CD4-positive, alpha-beta T cell (primary cell): ENCODE measurements at regions of chr2 and their contacts with region 1.

Region 1: DNA sequence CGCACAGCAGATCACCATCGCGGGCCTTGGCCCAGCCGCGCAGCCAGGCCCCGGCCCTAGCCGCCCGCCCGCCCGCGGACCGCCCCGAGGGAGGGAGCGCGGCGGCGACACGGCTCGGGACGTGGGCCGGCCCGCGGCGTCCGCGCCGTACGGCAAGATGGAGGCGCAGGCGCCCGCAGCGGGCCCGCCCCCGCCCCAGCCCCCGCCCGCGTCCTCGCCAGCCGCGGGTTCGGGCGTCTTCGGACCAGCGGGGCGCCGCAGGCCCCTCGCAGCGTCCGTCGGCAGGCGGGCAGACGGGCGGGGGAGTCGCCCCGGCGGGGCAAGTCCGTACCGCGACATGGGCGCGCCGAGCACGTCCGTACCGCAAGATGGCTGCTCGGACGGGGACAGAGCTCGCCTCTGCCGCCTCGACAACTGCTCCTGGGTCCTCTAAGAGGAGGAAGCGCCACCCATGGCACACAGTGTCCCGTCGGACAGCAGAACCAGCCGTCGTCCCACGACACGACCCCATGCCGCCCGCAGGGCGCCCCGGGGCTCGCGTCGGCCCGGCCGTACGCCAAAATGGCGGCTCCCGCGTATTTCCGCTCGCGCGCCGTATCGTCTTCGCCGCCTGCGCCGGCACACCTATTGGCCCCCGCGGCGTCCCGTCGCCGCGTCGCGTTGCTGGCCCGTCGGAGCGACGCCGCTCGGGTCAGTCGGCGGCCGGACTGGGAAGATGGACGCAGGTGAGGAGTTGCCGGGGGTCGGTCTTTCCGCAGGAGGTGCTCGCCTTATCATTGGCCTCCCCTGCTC is at the starts of genes ATG4B and THAP4:
- DNase-seq: peak; percentile 52 to 89 (median 68)
- ATAC-seq: peak; percentile 66
- H3K4me3 ChIP-seq: peak within 1 kb of the TSS; percentile 76
- H3K4me3 Mint-ChIP-seq: peak within 1 kb of the TSS; percentile 95
- H3K27ac ChIP-seq: peak within 1 kb of the TSS; percentile 82 to 93
- H3K27ac Mint-ChIP-seq: peak within 1 kb of the TSS; percentile 84
- H3K4me1 ChIP-seq: peaks cover 45% of the 10 kb centered on the region
- H3K4me1 Mint-ChIP-seq: peaks cover 56% of the 10 kb centered on the region
- H3K27me3 ChIP-seq: no peaks in the 10 kb centered on the region
- H3K27me3 Mint-ChIP-seq: no peaks in the 10 kb centered on the region
- CTCF ChIP-seq: no peak
- total RNA-seq, gene ATG4B: 86.5 to 89.4 TPM
- total RNA-seq, gene THAP4: 27.5 to 31.4 TPM

Region 2: DNA sequence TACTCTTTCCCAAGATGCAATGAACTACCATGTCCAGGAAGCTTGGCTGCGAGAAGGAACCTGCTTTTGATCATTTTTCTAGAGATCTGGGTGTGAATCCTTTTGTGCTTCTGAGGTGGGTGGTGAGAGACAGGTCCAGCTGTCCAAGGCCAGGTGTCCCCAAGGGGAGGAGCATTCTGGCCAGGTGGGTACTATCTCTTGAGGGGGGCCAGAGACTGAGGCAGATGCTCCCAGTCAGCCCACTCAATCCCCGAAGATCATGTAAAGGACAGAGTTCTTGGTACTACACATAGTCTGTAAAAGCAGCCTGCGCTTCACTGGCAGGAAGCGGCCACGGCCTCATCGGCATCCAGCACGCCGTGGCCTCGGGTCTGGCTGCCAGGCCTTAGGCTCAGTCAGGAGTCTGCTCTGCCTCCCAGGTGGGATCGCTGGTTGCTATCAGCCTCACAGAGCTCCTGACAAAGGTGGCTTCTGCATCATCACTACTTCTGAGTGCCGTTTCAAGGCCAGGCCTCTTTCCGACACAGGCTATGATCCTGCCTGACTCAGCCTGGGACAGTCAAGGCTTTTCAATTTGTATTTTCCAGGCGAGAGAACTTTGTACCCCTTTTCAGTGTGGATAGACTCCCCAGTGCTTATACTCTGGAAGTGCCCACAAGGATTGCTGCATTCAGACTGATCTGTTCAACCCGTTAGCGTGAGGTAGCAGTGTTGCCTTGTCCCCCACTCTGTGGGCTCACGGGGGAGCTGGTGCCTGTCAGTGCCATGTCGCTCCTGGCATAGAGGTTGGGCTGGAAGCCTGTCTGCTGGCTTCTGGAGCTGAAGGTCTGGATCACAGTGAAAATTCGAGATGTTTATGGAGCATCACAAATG is 157.9 kb before region 1 on chr2:
- CTCF ChIA-PET with region 1: no interaction called
- POLR2A ChIA-PET with region 1: no interaction called
- intact Hi-C with region 1: no loop called
- DNase-seq: no peak
- ATAC-seq: no peak
- H3K4me3 ChIP-seq: no peak overlapping the region
- H3K4me3 Mint-ChIP-seq: no peak overlapping the region
- H3K27ac ChIP-seq: no peak overlapping the region
- H3K27ac Mint-ChIP-seq: no peak overlapping the region
- H3K4me1 ChIP-seq: no peaks in the 10 kb centered on the region
- H3K4me1 Mint-ChIP-seq: no peaks in the 10 kb centered on the region
- H3K27me3 ChIP-seq: peaks cover 0 to under 1% of the 10 kb centered on the region in 2 experiments
- H3K27me3 Mint-ChIP-seq: peaks cover 3% of the 10 kb centered on the region
- CTCF ChIP-seq: no peak

Region 3: DNA sequence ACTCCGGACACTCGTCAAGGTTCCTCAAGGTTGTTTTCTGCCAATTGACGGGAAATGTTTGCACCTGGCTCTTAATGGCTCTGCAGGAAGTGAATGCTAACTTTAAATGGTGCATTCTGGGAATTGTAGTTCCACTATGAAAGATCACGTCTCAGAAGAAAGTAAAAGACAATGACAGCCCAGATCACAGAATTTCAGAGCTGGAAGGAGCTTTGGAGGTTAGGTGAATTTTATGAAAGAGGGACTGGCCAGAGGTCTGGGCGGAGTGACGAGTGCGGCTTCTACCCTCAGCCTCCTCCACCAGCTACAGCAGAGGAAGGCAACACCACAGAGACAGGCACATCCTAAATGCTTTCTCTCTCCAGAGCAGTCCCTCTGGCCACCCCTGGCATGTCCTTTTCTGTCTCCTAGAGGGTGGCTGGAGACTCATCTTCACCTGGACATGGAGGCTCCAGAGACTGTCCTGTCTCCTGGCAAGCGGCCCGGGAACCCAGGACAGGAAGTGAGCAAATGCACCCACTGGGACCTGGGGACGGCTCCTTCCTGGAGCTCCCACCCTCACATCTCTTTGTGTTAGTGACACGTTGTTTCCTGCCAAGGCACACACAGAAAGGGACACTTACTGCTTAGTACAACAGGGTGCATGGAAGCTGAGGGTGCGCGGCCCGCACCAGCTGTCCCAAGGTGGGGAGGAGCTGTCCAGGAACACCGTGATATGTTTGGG is 19.6 kb before region 1 on chr2:
- CTCF ChIA-PET with region 1: no interaction called
- POLR2A ChIA-PET with region 1: interaction called, 28 read pairs
- intact Hi-C with region 1: loop called in 1 of 2 experiments (anchors 2 kb)
- DNase-seq: peak in 8 of 14 experiments; percentile 17 to 81 (median 44)
- ATAC-seq: peak; percentile 84
- H3K4me3 ChIP-seq: peak overlapping the region; percentile 61
- H3K4me3 Mint-ChIP-seq: peak overlapping the region; percentile 88
- H3K27ac ChIP-seq: peak overlapping the region; percentile 58 to 75
- H3K27ac Mint-ChIP-seq: peak overlapping the region; percentile 77
- H3K4me1 ChIP-seq: peaks cover 26% of the 10 kb centered on the region
- H3K4me1 Mint-ChIP-seq: peaks cover 30% of the 10 kb centered on the region
- H3K27me3 ChIP-seq: no peaks in the 10 kb centered on the region
- H3K27me3 Mint-ChIP-seq: no peaks in the 10 kb centered on the region
- CTCF ChIP-seq: no peak

Region 4: DNA sequence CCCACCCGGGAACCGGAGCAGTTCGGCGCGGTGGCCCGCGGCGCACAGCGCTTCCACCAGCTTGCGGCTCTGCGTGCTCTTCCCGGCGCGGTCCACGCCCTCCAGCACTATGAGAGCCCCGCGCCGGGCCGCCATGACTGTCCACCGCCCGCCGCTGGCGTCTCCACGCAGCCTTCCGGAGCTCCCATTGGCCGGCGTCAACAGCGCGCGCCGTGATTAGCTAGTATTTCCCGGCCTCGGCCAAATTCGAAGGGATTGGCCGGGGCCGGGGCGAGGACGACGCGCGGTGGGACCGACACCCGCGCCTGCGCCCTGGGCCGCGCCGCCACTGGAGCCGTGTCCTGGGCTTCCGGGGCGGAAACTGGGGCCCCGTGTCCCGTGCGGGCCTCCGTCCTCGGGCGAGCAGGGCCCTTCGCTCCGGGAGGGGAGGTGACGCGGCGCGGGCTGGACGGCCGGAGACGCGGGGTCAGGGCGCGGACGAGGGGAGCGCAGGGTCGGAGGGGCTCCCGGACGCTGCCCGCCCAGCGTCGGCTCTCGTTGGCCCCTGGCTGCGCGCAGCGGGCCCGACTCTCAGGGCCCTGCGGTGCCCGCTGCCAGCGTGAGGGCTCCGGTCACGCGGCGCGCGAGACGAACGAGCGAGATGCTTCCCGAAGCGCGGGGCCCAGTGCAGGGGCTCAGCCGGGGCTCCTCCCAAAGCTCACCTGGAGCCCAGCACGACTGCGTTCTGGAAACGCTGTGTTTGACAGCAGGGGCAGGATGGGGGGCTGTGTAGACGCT is 49.6 kb after region 1 on chr2 and contains the start of gene DTYMK:
- CTCF ChIA-PET with region 1: interaction called, 3 read pairs
- POLR2A ChIA-PET with region 1: interaction called, 14 read pairs
- intact Hi-C with region 1: loop called (anchors 1 to 10 kb)
- DNase-seq: peak; percentile 89 to 98 (median 95)
- ATAC-seq: peak; percentile 90
- H3K4me3 ChIP-seq: peak within 1 kb of the TSS; percentile 84
- H3K4me3 Mint-ChIP-seq: peak within 1 kb of the TSS; percentile 95
- H3K27ac ChIP-seq: peak within 1 kb of the TSS; percentile 60 to 85
- H3K27ac Mint-ChIP-seq: peak within 1 kb of the TSS; percentile 84
- H3K4me1 ChIP-seq: peaks cover 37% of the 10 kb centered on the region
- H3K4me1 Mint-ChIP-seq: peaks cover 38% of the 10 kb centered on the region
- H3K27me3 ChIP-seq: no peaks in the 10 kb centered on the region
- H3K27me3 Mint-ChIP-seq: no peaks in the 10 kb centered on the region
- CTCF ChIP-seq: no peak
- total RNA-seq, gene DTYMK: 4.8 to 6.0 TPM